Activated CD4-positive, alpha-beta T cell treated with anti-CD3 and anti-CD28 coated beads for 36 hours (primary cell): ENCODE measurements at regions of chr16 and their contacts with region 1.

Region 1: GRCh38 chr16:2429034-2429770 is at the start of gene CCNF:
- DNase-seq: peak; percentile 99
- ATAC-seq: peak; percentile 97
- H3K4me3 Mint-ChIP-seq: peak within 1 kb of the TSS; percentile 97
- H3K27ac Mint-ChIP-seq: peak within 1 kb of the TSS; percentile 76
- H3K4me1 Mint-ChIP-seq: peaks cover 16% of the 10 kb centered on the region
- H3K27me3 Mint-ChIP-seq: no peaks in the 10 kb centered on the region
- total RNA-seq, gene CCNF: 52.2 to 53.4 TPM

Region 2: GRCh38 chr16:2023098-2023925 is 405.9 kb before region 1 on chr16:
- CTCF ChIA-PET with region 1: no interaction called
- POLR2A ChIA-PET with region 1: no interaction called
- intact Hi-C with region 1: loop called in 1 of 2 experiments (anchors 1 kb)
- DNase-seq: peak; percentile 97
- ATAC-seq: peak; percentile 86
- H3K4me3 Mint-ChIP-seq: peak overlapping the region; percentile 46
- H3K27ac Mint-ChIP-seq: no peak overlapping the region
- H3K4me1 Mint-ChIP-seq: peaks cover 15% of the 10 kb centered on the region
- H3K27me3 Mint-ChIP-seq: peaks cover 27% of the 10 kb centered on the region

Region 3: DNA sequence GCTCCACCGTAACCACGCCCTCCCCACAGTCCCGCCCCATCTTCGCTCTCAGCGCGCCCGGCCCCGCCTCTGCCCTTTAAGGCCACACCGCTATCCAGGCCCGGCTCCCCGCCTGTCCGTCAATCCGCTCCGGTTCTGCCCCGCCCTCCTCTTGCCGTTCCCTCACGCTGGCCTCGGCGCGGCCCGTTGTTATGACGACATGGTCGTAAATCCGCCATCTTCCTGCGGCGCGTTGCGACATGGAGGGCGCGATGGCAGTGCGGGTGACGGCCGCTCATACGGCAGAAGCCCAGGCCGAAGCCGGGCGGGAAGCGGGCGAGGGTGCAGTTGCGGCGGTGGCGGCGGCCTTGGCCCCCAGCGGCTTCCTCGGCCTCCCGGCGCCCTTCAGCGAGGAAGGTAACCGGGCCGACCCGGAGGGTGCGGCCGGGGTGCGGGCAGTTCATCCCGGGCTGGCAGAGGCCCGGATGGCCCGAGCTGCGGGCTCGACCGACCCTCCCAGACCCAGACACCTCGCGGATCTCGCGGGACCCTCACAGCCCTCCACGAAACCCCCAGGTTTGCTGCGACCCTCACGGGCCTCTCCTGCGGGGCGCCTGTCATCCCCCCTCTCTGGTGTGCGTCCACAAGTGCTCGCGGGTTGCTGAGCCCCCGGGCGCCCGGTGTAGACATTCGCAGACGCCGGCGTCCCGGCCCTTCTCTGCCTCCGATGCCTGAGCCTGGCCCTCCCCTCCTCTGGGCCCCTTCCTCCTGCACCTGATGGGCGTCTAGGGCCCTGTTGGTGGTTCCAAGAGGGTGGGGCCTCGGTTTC is 205.6 kb before region 1 on chr16 and contains the start of gene E4F1:
- CTCF ChIA-PET with region 1: interaction called, 3 read pairs
- POLR2A ChIA-PET with region 1: no interaction called
- intact Hi-C with region 1: loop called in 1 of 2 experiments (anchors 1 kb)
- DNase-seq: peak; percentile 100
- ATAC-seq: peak; percentile 99
- H3K4me3 Mint-ChIP-seq: peak within 1 kb of the TSS; percentile 78
- H3K27ac Mint-ChIP-seq: peak within 1 kb of the TSS; percentile 13
- H3K4me1 Mint-ChIP-seq: peaks cover 15% of the 10 kb centered on the region
- H3K27me3 Mint-ChIP-seq: no peaks in the 10 kb centered on the region
- total RNA-seq, gene E4F1: 18.0 to 18.6 TPM

Region 4: DNA sequence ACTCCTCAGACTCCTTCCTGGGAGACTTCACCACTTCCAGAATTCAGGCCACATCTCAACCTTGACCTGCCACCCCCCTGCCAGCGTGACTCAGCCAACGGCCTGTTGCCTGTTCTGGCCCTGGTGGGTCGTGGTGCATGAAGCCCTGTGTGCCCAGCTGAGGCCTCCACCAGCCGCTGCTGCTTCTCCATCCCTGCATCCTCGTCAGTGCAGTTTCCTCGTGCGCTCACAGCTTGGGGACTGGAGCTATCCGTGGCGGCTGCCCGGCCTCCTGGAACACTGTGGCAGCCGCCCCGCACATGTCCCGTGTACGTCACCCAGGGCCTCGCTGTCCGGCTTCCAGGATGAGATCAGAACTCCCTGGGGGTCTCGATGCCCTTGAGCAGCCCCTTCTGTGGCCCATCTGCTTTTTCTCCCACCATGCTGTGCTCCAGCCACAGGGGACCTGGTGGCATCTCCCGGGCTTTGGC is 22.7 kb after region 1 on chr16:
- CTCF ChIA-PET with region 1: no interaction called
- POLR2A ChIA-PET with region 1: no interaction called
- intact Hi-C with region 1: no loop called
- DNase-seq: no peak
- ATAC-seq: no peak
- H3K4me3 Mint-ChIP-seq: no peak overlapping the region
- H3K27ac Mint-ChIP-seq: no peak overlapping the region
- H3K4me1 Mint-ChIP-seq: no peaks in the 10 kb centered on the region
- H3K27me3 Mint-ChIP-seq: no peaks in the 10 kb centered on the region

Region 5: DNA sequence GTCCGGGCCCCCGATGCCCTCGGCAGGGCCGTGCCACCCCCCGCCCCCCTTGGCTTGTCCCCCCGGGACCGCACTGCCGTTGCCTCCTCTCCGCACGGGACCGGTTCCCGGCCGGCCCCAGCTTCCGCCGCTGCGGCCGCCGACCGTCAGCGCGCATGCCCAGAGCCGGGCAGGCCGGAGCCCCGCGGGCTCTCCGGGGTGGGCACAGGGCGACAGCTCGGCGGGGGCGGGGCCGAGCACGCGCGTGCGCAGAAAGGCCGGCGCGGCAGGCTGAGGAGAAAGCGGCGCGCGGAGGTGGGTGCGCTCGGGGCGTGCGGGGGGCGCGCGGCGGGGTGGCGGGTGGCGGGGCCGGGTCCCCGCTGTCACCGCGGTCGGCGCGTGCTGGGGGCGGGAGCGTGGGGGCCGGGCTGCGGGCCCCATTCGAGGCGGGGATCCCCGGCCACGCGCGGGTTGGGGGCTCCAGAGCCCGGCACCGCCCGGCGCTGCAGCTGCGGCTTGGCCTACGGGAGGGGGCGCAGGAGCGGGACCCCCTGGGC is 45.7 kb after region 1 on chr16 and contains the start of gene TBC1D24:
- CTCF ChIA-PET with region 1: no interaction called
- POLR2A ChIA-PET with region 1: no interaction called
- intact Hi-C with region 1: loop called in 1 of 2 experiments (anchors 1 kb)
- DNase-seq: peak; percentile 89
- ATAC-seq: peak; percentile 71
- H3K4me3 Mint-ChIP-seq: peak within 1 kb of the TSS; percentile 71
- H3K27ac Mint-ChIP-seq: peak within 1 kb of the TSS; percentile 69
- H3K4me1 Mint-ChIP-seq: peaks cover 6% of the 10 kb centered on the region
- H3K27me3 Mint-ChIP-seq: peaks cover 16% of the 10 kb centered on the region
- total RNA-seq, gene TBC1D24: 10.4 to 12.7 TPM

Region 6: GRCh38 chr16:2520092-2520783 is 91.0 kb after region 1 on chr16 and contains the start of gene AMDHD2:
- CTCF ChIA-PET with region 1: no interaction called
- POLR2A ChIA-PET with region 1: no interaction called
- intact Hi-C with region 1: loop called in 1 of 2 experiments (anchors 1 kb)
- DNase-seq: peak; percentile 95
- ATAC-seq: peak; percentile 77
- H3K4me3 Mint-ChIP-seq: peak within 1 kb of the TSS; percentile 80
- H3K27ac Mint-ChIP-seq: peak within 1 kb of the TSS; percentile 89
- H3K4me1 Mint-ChIP-seq: peaks cover 52% of the 10 kb centered on the region
- H3K27me3 Mint-ChIP-seq: no peaks in the 10 kb centered on the region
- total RNA-seq, gene AMDHD2: 20.9 to 31.6 TPM

Region 7: GRCh38 chr16:2905431-2906387 is 476.5 kb after region 1 on chr16:
- CTCF ChIA-PET with region 1: interaction called, 3 read pairs
- POLR2A ChIA-PET with region 1: no interaction called
- intact Hi-C with region 1: loop called in 1 of 2 experiments (anchors 5 kb)
- DNase-seq: peak; percentile 100
- ATAC-seq: peak; percentile 81
- H3K4me3 Mint-ChIP-seq: peak overlapping the region; percentile 94
- H3K27ac Mint-ChIP-seq: peak overlapping the region; percentile 8
- H3K4me1 Mint-ChIP-seq: peaks cover 19% of the 10 kb centered on the region
- H3K27me3 Mint-ChIP-seq: no peaks in the 10 kb centered on the region